CD4-positive, alpha-beta memory T cell (primary cell): ENCODE measurements at regions of chr1 and their contacts with region 1.

Region 1: GRCh38 chr1:154157520-154158306 is 2.8 kb upstream of the NUP210L start:
- DNase-seq: peak; percentile 80 to 91 (median 85)
- H3K4me3 ChIP-seq: peak overlapping the region in 1 of 2 donors; percentile 6
- H3K4me3 Mint-ChIP-seq: peak overlapping the region; percentile 50 to 88 (median 80)
- H3K27ac ChIP-seq: peak overlapping the region; percentile 47
- H3K27ac Mint-ChIP-seq: peak overlapping the region; percentile 89 to 96 (median 95)
- H3K4me1 ChIP-seq: peaks cover 66% of the 10 kb centered on the region
- H3K4me1 Mint-ChIP-seq: peaks cover 49 to 71% (median 61%) of the 10 kb centered on the region in 4 donors
- H3K27me3 ChIP-seq: no peaks in the 10 kb centered on the region
- H3K27me3 Mint-ChIP-seq: no peaks in the 10 kb centered on the region

Region 2: GRCh38 chr1:154176337-154176736 is 18.6 kb after region 1 on chr1:
- CTCF ChIA-PET with region 1: interaction called, 6 read pairs
- POLR2A ChIA-PET with region 1: interaction called, 71 read pairs
- intact Hi-C with region 1: no loop called
- DNase-seq: no peak
- H3K4me3 ChIP-seq: no peak overlapping the region
- H3K4me3 Mint-ChIP-seq: peak overlapping the region in 6 of 8 donors; percentile 33 to 68 (median 53)
- H3K27ac ChIP-seq: peak overlapping the region; percentile 23
- H3K27ac Mint-ChIP-seq: peak overlapping the region; percentile 32 to 98 (median 65)
- H3K4me1 ChIP-seq: peaks cover 64% of the 10 kb centered on the region
- H3K4me1 Mint-ChIP-seq: peaks cover 55 to 76% (median 66%) of the 10 kb centered on the region in 4 donors
- H3K27me3 ChIP-seq: no peaks in the 10 kb centered on the region
- H3K27me3 Mint-ChIP-seq: no peaks in the 10 kb centered on the region

Region 3: DNA sequence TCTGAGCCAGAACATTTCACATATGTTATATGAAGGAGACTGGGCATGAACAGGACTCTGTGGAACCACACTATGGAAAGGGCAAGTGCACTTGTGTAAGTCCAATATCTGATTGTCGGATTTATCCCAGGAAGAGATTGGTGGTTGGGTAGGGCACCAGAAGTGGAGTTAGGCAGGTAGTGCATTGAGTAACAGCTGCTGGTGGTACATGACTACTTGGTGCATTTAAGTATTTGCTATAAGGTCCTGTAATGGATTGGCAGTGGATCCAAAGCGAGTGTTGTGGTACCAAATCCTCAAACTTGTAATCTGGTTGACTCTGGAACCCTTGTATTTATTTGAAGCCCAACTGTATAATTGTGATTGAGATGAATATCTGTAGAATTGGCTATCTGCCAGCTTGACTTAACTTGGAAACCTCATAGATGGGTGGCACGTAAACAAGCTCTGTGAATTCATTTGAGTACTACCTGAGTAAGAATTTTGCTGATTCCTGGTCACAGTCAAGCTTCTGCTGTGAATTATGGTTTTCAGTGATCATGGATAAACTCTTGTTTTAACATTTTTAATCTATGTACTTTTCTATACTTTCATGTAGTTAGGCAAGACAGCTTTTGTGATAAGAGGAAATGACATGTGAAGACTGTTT is 84.1 kb after region 1 on chr1:
- CTCF ChIA-PET with region 1: no interaction called
- POLR2A ChIA-PET with region 1: no interaction called
- intact Hi-C with region 1: no loop called
- DNase-seq: peak in 3 of 5 donors; percentile 17 to 19 (median 19)
- H3K4me3 ChIP-seq: no peak overlapping the region
- H3K4me3 Mint-ChIP-seq: no peak overlapping the region
- H3K27ac ChIP-seq: no peak overlapping the region
- H3K27ac Mint-ChIP-seq: peak overlapping the region; percentile 6 to 91 (median 36)
- H3K4me1 ChIP-seq: peaks cover 18% of the 10 kb centered on the region
- H3K4me1 Mint-ChIP-seq: peaks cover 23 to 30% (median 26%) of the 10 kb centered on the region in 4 donors
- H3K27me3 ChIP-seq: no peaks in the 10 kb centered on the region
- H3K27me3 Mint-ChIP-seq: no peaks in the 10 kb centered on the region